HCT116 (cell line): ENCODE measurements at regions of chr1 and their contacts with region 1.

Region 1: GRCh38 chr1:218703836-218704235 is 358.7 kb downstream of the TGFB2 start:
- DNase-seq: no peak
- ATAC-seq: no peak
- H3K4me3 ChIP-seq: no peak overlapping the region
- H3K27ac ChIP-seq: no peak overlapping the region
- H3K4me1 ChIP-seq: peaks cover 31 to 39% of the 10 kb centered on the region in 2 experiments
- H3K27me3 ChIP-seq: no peaks in the 10 kb centered on the region
- CTCF ChIP-seq: no peak
- POLR2A ChIP-seq: no peak
- RAD21 ChIP-seq: no peak

Region 2: DNA sequence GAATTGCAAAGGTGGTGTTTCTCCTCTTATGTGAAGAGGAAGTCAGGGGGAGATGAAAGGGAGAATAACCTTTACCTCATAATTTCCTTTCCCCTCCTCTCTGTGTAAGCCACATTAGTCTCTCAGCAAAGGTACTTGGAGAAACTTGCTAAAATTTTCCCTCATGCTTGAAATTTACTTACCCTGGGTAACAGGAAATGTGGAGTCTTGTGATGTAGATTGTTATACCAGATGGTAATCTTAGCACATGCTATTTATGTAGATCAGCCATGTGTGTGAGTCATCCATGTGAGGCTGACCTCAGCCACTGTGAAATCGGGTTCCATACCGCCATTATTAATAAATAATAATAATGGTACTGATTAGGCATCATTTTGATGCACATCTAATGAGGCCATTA is 230.3 kb before region 1 on chr1:
- CTCF ChIA-PET with region 1: no interaction called
- POLR2A ChIA-PET with region 1: no interaction called
- RAD21 ChIA-PET with region 1: no interaction called
- intact Hi-C with region 1: no loop called
- DNase-seq: no peak
- ATAC-seq: no peak
- H3K4me3 ChIP-seq: no peak overlapping the region
- H3K27ac ChIP-seq: no peak overlapping the region
- H3K4me1 ChIP-seq: peaks cover 0 to 10% of the 10 kb centered on the region in 2 experiments; a peak in 2 of 4 replicates
- H3K27me3 ChIP-seq: no peaks in the 10 kb centered on the region
- CTCF ChIP-seq: no peak
- POLR2A ChIP-seq: no peak
- RAD21 ChIP-seq: no peak

Region 3: GRCh38 chr1:218717575-218717974 is 13.7 kb after region 1 on chr1:
- CTCF ChIA-PET with region 1: no interaction called
- POLR2A ChIA-PET with region 1: no interaction called
- RAD21 ChIA-PET with region 1: no interaction called
- intact Hi-C with region 1: loop called (anchors 1 kb)
- DNase-seq: no peak
- ATAC-seq: no peak
- H3K4me3 ChIP-seq: no peak overlapping the region
- H3K27ac ChIP-seq: no peak overlapping the region
- H3K4me1 ChIP-seq: no peaks in the 10 kb centered on the region
- H3K27me3 ChIP-seq: no peaks in the 10 kb centered on the region
- CTCF ChIP-seq: no peak
- POLR2A ChIP-seq: no peak
- RAD21 ChIP-seq: no peak